A549 (cell line): ENCODE measurements at regions of chr7 and their contacts with region 1.

Region 1: GRCh38 chr7:35801392-35802101 is 690 bp downstream of the SEPTIN7 start:
- DNase-seq: peak; percentile 39 to 66
- ATAC-seq: peak; percentile 72 to 74
- H3K4me3 ChIP-seq: peak overlapping the region; percentile 75
- H3K27ac ChIP-seq: peak overlapping the region; percentile 96 to 98
- H3K4me1 ChIP-seq: peaks cover 30% of the 10 kb centered on the region
- CTCF ChIP-seq: peak; percentile 82
- EP300 ChIP-seq: no peak
- POLR2A ChIP-seq: no peak
- RAD21 ChIP-seq: peak; percentile 22 to 47; a peak in 3 of 5 replicates

Region 2: DNA sequence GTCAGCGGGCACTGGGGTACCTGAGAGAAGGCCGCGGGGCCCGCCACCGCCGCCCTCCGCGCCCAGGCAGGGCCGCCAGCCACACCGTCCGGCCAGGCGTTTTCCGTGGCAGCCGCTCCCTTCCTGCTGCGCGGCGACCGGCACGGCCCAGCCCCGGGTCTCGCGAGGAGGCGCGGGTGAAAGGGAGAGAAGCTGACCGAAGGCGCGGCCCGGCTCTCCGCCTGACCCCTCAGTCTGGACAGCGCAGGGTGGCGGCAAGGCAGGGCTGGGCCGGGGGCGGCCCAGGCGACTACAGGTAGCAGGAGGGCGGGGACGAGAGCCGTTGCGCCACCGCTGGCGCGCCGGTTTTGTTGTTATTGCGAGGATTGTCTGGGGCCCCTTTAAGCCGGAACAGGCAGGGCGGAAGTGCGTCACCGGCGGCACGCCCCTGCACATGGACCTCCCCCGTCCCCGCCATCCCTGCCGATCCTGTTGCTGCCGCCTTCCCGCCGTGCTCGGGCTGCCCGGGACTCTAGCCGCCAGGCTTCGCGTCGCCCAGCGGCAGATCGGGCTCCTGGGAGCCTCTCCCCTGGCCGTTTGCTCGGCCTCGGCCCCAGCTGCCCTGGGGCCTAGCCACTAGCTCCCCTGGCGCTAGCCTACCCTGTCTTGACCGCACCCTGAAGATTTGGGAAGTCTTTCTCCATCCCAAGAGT is 106.6 kb before region 1 on chr7 and contains the start of gene HERPUD2:
- CTCF ChIA-PET with region 1: no interaction called
- POLR2A ChIA-PET with region 1: interaction called, 36 read pairs
- DNase-seq: peak; percentile 87 to 95
- ATAC-seq: peak; percentile 96
- H3K4me3 ChIP-seq: peak within 1 kb of the TSS; percentile 100
- H3K27ac ChIP-seq: peak within 1 kb of the TSS; percentile 98 to 100
- H3K4me1 ChIP-seq: peaks cover 49% of the 10 kb centered on the region
- CTCF ChIP-seq: no peak
- EP300 ChIP-seq: no peak
- POLR2A ChIP-seq: peak; percentile 84
- RAD21 ChIP-seq: no peak
- polyA plus RNA-seq, gene HERPUD2: 34.8 and 47.8 TPM in 2 replicates

Region 3: GRCh38 chr7:35714862-35715261 is 86.7 kb before region 1 on chr7:
- CTCF ChIA-PET with region 1: interaction called, 20 read pairs
- POLR2A ChIA-PET with region 1: interaction called, 6 read pairs
- DNase-seq: no peak
- ATAC-seq: peak; percentile 39 to 56; a peak in 4 of 6 replicates
- H3K4me3 ChIP-seq: no peak overlapping the region
- H3K27ac ChIP-seq: no peak overlapping the region
- H3K4me1 ChIP-seq: peaks cover 16% of the 10 kb centered on the region; the same call in 2 of the 3 replicates
- CTCF ChIP-seq: no peak
- EP300 ChIP-seq: no peak
- POLR2A ChIP-seq: no peak
- RAD21 ChIP-seq: no peak

Region 4: DNA sequence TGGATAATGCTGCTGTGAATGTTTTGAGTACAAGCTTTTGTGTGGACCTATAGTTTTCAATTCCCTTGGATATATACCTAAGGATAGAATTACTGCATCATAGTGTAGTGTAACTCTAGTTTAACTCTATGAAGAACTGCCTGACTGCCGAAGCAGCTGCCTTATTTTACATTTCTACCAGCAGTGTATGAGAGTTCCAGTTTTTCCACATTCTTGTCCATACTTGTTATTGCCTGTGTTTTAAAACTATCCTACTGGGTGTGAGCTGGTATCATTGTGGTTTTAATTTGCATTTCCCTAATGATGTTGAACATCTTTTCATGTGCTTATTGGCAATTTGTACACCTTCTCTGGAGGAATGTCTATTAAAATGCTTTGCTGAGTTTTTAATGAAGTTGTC is 15.0 kb after region 1 on chr7:
- CTCF ChIA-PET with region 1: interaction called, 17 read pairs
- POLR2A ChIA-PET with region 1: interaction called, 7 read pairs
- DNase-seq: no peak
- ATAC-seq: no peak
- H3K4me3 ChIP-seq: no peak overlapping the region
- H3K27ac ChIP-seq: no peak overlapping the region
- H3K4me1 ChIP-seq: no peaks in the 10 kb centered on the region
- CTCF ChIP-seq: no peak
- EP300 ChIP-seq: no peak
- POLR2A ChIP-seq: no peak
- RAD21 ChIP-seq: no peak

Region 5: DNA sequence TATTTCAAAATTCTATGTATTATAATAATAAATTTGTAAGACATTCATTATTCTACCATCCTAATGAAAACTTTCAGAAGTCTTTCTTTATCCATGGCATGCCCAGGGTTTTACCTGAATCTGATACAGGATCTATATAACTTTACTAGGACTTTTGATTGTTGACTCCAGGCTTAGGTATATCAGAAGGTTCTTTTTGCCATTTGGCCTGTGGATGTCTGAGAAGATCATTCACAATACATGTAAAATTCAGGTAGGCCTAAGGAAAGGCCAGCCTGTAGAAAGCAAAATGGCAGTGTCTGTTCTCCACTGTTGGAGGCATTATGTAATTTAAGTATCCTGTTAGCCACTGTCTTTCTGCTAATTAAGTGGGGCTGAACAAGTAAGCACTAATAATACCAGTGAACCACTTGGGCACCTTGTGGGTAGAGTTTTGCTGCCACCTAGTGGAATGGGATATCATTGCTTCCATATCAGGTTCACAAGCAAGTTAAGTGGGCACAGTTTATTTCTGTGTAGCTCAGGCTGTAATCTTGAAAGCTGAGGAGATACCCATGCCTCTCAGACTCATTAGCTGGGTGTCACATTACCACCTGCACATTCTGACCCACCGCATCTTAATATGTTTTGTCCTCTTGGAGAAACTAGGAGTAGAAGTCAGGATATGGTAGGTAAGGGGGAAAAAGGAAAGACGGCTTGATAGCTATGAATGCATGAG is 104.8 kb after region 1 on chr7:
- CTCF ChIA-PET with region 1: interaction called, 18 read pairs
- POLR2A ChIA-PET with region 1: no interaction called
- DNase-seq: peak; percentile 38 to 84
- ATAC-seq: peak; percentile 93 to 96; a peak in 5 of 6 replicates
- H3K4me3 ChIP-seq: no peak overlapping the region
- H3K27ac ChIP-seq: no peak overlapping the region
- H3K4me1 ChIP-seq: no peaks in the 10 kb centered on the region
- CTCF ChIP-seq: peak; percentile 95
- EP300 ChIP-seq: no peak
- POLR2A ChIP-seq: no peak
- RAD21 ChIP-seq: peak; percentile 91 to 92